ENCODE measurements at regions of chr6 and their contacts with region 1.

Region 1: DNA sequence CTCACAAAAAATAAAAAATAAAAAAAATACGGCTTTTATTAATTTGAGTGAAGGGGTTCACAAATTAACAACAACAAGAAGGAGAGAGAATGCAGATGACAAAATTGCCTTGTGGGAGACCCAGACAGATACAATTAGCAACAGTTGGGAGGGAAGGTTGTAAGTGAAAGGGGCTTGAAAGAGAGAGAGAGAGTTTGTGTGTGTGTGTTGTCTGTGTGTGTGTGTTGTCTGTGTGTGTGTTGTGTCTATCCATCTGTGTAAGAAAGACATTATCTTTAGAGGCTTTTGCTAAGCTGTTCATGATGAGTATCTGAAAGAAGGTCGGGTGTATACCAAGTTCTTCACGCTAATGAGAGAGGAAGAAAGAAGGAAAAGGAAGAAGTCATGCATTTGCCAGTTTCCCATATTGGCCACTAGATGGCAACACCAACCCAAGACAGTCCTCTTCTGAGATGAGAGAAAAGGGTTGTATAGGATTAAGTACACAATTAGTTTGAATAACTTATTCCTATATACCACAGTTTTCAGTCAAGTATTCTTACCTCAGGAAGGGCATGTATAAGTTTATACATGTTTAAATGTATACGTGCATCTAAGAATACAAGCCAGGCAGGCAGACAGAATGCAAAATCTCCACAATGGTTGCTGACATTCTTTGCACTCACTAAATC is 63.7 kb upstream of the CD2AP start:
- DNase-seq: peak in 1 of 3 donors; percentile 45
- ATAC-seq: peak; percentile 90
- H3K4me3 ChIP-seq: no peak overlapping the region
- H3K4me1 ChIP-seq: no peaks in the 10 kb centered on the region
- CTCF ChIP-seq: peak; percentile 75

Region 2: DNA sequence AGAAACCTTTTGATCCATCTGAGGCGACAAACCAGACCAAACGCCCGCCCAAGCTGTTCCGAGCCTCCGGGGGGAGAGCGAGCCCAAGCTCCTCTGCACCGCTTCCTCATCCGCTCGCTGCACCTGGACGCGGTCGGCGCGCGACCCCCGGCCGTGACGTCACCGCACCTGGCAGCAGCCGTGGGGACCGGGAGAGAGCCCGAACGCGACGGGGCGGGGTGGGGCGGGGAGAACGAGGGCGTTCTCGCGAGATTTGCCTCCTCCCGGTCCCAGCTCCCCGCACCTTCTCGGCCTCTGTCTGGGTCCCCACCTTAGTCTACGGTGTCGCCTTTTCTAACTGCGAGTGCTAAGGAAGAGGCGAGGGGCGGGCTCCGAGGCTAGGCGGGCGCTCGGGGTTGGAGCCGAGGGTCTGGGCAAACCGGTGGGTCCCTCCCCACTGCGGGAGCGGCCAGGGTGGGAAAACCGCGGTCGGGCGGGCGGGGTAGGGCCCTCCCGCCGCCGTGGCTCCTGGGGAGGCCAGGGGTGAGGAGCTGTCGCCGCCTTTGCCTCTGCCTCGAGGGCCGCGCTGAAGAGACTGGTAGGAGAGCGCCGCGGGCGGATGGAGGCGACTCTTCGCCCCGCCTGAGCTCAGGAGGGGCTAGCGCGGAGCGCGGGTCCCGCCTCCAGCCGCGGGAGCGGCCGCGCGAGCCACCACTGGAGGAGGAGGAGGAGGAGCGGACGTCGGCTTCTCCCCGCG is 63.8 kb after region 1 on chr6 and contains the start of gene CD2AP:
- intact Hi-C with region 1: loop called in 1 of 2 experiments (anchors 10 kb)
- DNase-seq: peak; percentile 94 to 95 (median 94)
- ATAC-seq: peak; percentile 92
- H3K4me3 ChIP-seq: peak within 1 kb of the TSS; percentile 67
- H3K4me1 ChIP-seq: peaks cover 11% of the 10 kb centered on the region
- CTCF ChIP-seq: no peak
- total RNA-seq, gene CD2AP: 61.7 to 173 (median 104) TPM

Region 3: GRCh38 chr6:47603995-47604394 is 190.1 kb after region 1 on chr6:
- intact Hi-C with region 1: loop called in 1 of 2 experiments (anchors 10 kb)
- DNase-seq: peak in 1 of 3 donors; percentile 47
- ATAC-seq: peak; percentile 45
- H3K4me3 ChIP-seq: no peak overlapping the region
- H3K4me1 ChIP-seq: peaks cover 13% of the 10 kb centered on the region
- CTCF ChIP-seq: no peak

Region 4: DNA sequence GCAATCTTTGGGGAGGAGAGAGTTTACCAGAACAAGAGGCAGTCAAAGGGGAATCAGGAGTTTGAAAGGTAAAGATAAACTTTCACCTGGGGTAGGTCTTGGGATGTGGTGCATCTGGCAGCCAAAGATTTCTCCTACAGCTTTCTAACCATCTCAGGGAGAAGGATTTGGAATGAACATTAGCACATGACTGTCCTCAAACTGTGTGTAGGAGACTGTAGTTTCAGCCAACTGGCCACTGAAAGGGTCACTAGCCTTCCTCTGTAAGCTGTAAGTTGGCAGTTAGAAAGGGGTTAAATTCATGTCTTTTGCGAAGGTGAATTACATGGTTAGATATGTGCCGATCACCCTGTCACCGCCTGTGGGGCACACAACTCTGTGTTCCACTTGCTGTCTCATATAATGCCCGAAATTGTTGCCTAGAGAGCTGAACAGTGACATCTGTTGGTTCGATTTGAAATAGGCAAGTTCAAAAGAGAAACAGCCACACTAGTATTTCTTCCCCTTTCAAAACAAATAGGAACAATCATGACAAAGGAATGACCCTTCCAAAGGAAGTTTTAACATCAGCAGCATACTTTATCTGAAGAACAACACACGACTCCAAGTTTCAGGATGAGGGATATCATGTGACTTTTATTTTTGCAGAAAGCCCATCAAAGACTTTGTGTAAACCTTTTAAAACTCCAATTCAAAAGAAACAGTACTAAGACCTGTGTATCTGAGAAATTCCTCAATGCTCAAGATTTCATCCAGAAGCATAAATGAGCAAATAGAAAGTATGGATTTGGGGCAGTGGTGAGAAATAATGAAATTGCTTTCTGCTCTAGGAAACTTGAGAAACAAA is 366.8 kb after region 1 on chr6:
- intact Hi-C with region 1: loop called (anchors 5 to 10 kb)
- DNase-seq: peak in 2 of 3 donors; percentile 33 to 51
- ATAC-seq: peak; percentile 92
- H3K4me3 ChIP-seq: no peak overlapping the region
- H3K4me1 ChIP-seq: no peaks in the 10 kb centered on the region
- CTCF ChIP-seq: no peak

Region 5: DNA sequence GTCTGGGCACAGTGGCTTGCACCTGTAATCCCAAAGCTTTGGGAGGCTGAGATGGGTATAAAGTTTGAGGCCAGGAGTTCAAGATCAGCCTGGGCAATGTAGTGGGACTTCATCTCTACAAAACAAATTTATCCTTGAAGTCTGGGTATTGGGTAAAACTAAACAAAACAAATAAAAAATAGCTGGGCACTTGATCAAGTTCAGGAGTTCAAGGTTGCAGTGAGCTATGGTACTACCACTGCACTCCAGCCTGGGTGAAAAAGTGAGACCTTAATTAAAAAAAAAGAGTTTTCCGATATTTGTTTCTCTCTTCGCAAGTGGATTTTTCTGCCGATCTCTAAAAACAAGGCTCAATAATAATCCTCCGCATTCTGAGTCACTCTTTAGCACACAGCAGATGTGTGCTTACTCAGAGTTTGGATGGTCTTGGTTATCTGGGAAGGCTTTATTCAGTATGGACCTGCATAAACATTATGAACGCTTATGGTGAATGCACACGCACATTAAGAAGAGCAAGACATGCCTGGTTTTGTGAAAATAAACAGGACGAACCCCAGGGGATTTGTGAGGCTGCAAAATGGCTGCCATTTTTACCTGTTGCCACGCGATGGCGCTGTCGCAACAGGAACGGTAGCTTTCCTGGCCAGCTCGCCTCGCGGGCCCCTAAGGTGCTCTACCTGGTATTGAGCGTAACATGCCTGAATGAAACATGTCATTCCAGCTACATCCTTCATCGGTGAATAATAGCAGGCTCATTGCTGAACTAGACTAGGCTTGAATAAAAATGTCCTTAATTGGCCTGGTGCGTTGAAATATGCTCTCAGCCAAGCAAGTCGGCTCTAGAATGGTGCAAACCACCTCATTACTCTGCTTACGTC is 374.0 kb after region 1 on chr6:
- intact Hi-C with region 1: loop called (anchors 5 to 10 kb)
- DNase-seq: peak in 2 of 3 donors; percentile 58 to 71
- ATAC-seq: peak; percentile 88
- H3K4me3 ChIP-seq: no peak overlapping the region
- H3K4me1 ChIP-seq: no peaks in the 10 kb centered on the region
- CTCF ChIP-seq: peak; percentile 73

Measured in mucosa of descending colon (tissue), 3 donors.